Gastrocnemius medialis (tissue), 4 donors: ENCODE measurements at regions of chr3 and their contacts with region 1.

Region 1: GRCh38 chr3:15815696-15816095 is 17.9 kb upstream of the ANKRD28 start:
- DNase-seq: no peak
- ATAC-seq: peak; percentile 74 to 85
- H3K4me3 ChIP-seq: no peak overlapping the region
- H3K27ac ChIP-seq: peak overlapping the region in 2 of 4 donors; percentile 37 to 42
- H3K4me1 ChIP-seq: peaks cover 8 to 18% of the 10 kb centered on the region in 2 donors
- H3K27me3 ChIP-seq: no peaks in the 10 kb centered on the region
- CTCF ChIP-seq: peak in 3 of 5 experiments; percentile 43 to 78 (median 55)
- POLR2A ChIP-seq: no peak

Region 2: GRCh38 chr3:15629860-15630597 is 185.7 kb before region 1 on chr3:
- in situ Hi-C with region 1: loop called (anchors 5 kb)
- intact Hi-C with region 1: loop called (anchors 1 kb)
- DNase-seq: peak; percentile 69 to 76
- ATAC-seq: peak; percentile 91 to 93
- H3K4me3 ChIP-seq: peak overlapping the region; percentile 24 to 50 (median 37)
- H3K27ac ChIP-seq: peak overlapping the region; percentile 77 to 90 (median 84)
- H3K4me1 ChIP-seq: peaks cover 25 to 27% of the 10 kb centered on the region in 2 donors
- H3K27me3 ChIP-seq: no peaks in the 10 kb centered on the region
- CTCF ChIP-seq: peak; percentile 77 to 85 (median 78)
- POLR2A ChIP-seq: no peak

Region 3: GRCh38 chr3:15892311-15893227 is 76.9 kb after region 1 on chr3:
- in situ Hi-C with region 1: no loop called
- intact Hi-C with region 1: loop called (anchors 5 kb)
- DNase-seq: no peak
- ATAC-seq: no peak
- H3K4me3 ChIP-seq: no peak overlapping the region
- H3K27ac ChIP-seq: peak overlapping the region in 3 of 4 donors; percentile 85 to 90 (median 87)
- H3K4me1 ChIP-seq: peaks cover 21 to 22% of the 10 kb centered on the region in 2 donors
- H3K27me3 ChIP-seq: no peaks in the 10 kb centered on the region
- CTCF ChIP-seq: no peak
- POLR2A ChIP-seq: no peak